ENCODE measurements at regions of chr6 and their contacts with region 1.

Region 1: DNA sequence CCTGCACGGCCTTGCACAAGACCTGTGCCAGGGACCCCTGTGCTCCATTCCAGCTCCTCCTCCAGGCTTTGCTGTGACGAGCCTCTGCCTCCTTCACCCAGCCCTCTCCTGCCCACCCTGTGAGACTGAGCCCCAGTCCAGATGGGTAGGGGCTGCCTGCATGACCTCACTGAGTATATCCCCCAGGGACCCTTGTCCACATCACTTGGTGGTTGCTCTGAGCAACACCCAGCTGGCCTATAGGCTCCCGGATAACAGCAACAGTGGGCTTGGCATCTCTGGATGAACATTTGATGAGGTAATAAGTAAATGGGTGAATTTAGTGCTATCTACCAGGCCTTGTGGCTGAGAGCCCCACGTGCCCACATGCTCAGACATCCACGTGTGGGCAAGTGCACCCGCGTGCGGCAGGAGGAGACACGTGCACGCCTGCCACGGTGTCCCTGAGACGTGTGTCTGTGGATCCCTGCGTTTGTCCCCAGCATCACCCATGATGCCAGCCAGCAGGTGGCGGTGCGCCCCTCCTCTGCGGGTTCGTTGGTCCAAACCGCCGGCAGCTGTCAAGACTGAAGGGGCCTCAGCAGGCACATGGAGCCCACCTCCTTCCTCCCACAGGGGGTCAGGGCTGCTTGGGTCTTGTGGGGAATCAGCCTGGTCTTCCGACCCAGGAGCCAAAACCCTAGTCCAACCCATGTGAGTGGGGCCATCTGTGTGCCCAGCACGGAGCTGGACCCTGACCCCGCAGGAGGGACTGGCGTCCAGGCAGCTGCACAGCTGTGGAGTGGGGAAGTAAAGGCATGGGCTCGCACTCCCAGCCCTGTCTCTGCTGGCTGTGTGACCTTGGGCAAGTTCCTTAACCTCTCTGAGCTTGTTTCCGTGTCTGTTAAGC is 45.9 kb downstream of the FGD2 start:
- DNase-seq: peak; percentile 88 to 93
- ATAC-seq: peak; percentile 77 to 90 (median 83)
- H3K4me3 ChIP-seq: peak overlapping the region in 1 of 10 donors; percentile 31
- H3K27ac ChIP-seq: peak overlapping the region in 5 of 10 donors; percentile 46 to 93 (median 73)
- H3K4me1 ChIP-seq: peaks cover 6 to 58% (median 19%) of the 10 kb centered on the region in 9 donors
- H3K27me3 ChIP-seq: no peaks in the 10 kb centered on the region
- CTCF ChIP-seq: peak; percentile 80 to 94 (median 91)

Region 2: GRCh38 chr6:36897609-36898008 is 153.8 kb before region 1 on chr6:
- intact Hi-C with region 1: no loop called
- DNase-seq: no peak
- ATAC-seq: peak in 2 of 8 donors; percentile 63 to 68
- H3K4me3 ChIP-seq: no peak overlapping the region
- H3K27ac ChIP-seq: no peak overlapping the region
- H3K4me1 ChIP-seq: peaks cover 0 to 6% (median 0%) of the 10 kb centered on the region in 9 donors
- H3K27me3 ChIP-seq: no peaks in the 10 kb centered on the region
- CTCF ChIP-seq: peak in 8 of 9 donors; percentile 4 to 49 (median 28)

Region 3: DNA sequence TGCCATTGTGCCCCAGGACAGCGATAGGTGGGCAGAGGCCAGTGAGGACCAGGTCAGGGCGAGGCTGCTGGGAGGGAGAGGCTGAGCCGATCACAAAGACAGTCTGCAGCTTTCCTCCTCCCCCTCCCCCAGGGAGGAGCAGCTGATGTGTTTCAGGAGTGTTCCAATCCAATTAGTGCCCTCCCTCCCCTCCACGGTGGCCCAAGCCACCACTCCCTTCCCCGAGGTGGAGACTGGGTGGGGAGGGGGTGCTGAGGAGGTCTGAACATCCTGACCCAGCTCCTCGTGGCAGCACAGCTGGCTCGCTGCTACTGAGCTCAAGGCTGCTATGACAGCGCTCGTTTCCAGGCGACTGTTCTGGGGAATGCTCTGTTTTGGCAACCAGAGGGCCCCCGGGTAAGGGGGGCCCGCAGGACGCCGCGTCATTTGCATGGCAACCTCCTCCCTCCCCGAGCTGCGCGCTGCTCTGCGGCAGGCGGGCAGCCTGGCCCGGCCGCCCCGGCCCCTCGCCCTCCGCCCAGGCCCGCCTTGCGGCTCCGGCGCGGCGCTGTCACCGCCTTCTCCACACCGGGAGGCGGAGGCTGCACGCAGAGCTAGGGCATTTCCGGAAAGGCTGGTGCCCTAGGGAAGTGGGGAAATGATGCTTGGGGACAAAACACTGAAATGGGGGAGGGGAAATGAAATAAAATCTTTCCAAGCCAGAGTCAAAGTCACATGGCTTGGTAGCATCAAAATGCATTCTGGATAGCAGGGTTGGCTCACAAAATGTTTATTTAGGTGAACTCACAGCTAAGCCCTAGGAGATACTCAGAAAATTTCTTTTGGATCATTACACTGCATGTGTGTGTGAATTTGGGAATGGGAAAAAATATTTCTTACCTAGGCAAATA is 51.1 kb after region 1 on chr6:
- intact Hi-C with region 1: loop called in 1 of 10 experiments (anchors 2 kb)
- DNase-seq: peak; percentile 87 to 89
- ATAC-seq: peak; percentile 91 to 97 (median 94)
- H3K4me3 ChIP-seq: peak overlapping the region; percentile 14 to 60 (median 48)
- H3K27ac ChIP-seq: peak overlapping the region; percentile 51 to 94 (median 86)
- H3K4me1 ChIP-seq: peaks cover 7 to 39% (median 21%) of the 10 kb centered on the region in 9 donors
- H3K27me3 ChIP-seq: no peaks in the 10 kb centered on the region
- CTCF ChIP-seq: no peak

Region 4: GRCh38 chr6:37131104-37131959 is 80.0 kb after region 1 on chr6:
- intact Hi-C with region 1: loop called in 2 of 10 experiments (anchors 2 to 5 kb)
- DNase-seq: peak; percentile 51 to 82
- ATAC-seq: peak; percentile 82 to 93 (median 88)
- H3K4me3 ChIP-seq: peak overlapping the region in 1 of 10 donors; percentile 3
- H3K27ac ChIP-seq: peak overlapping the region; percentile 56 to 89 (median 72)
- H3K4me1 ChIP-seq: peaks cover 0 to 60% (median 24%) of the 10 kb centered on the region in 9 donors
- H3K27me3 ChIP-seq: no peaks in the 10 kb centered on the region
- CTCF ChIP-seq: peak in 1 of 9 donors; percentile 8

Region 5: DNA sequence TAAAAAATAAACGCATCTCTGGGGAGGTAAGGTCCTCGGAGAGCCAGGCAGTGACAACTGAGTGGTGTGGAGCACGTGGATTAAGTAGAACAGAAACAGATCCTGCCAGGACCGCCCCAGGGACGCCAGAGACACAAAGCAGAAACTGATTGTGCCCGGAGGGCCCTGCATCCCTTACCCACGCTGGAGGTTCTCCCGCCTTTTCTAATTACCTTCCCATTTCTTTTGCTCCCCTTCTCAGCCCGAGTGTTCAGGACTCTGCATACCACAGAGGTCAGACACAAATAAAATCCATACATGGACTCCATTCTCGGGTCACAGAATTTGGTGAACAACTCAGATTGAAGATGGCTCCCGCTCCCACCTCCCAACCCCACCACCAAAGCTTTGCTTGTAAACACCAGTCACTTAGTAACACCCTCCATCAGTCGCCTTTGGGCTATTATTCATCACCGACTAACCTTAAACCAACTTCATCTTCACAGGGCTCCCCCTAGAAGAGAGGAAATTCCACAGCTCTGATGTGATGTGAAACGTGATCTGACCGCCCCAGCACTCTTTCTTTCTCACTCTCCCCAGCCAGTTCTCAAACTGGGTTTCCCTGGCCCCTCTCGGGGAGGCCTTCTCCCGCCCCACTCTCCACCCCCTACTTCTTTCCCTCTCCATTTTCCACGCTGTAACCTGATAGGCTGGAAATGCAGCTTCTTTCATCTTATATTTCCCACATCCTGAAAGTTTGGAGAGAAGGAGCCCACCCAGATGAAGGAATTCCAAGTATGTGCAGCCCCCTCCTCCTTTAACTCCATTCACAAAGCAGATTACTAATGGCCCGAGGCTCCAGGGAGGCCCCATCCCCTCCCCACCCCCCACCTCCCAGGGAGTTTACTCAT is 86.1 kb after region 1 on chr6:
- intact Hi-C with region 1: loop called in 1 of 10 experiments (anchors 5 kb)
- DNase-seq: no peak
- ATAC-seq: peak; percentile 28 to 75 (median 46)
- H3K4me3 ChIP-seq: no peak overlapping the region
- H3K27ac ChIP-seq: peak overlapping the region in 2 of 10 donors; percentile 7 to 77
- H3K4me1 ChIP-seq: peaks cover 3 to 44% (median 13%) of the 10 kb centered on the region in 9 donors
- H3K27me3 ChIP-seq: no peaks in the 10 kb centered on the region
- CTCF ChIP-seq: no peak

Region 6: DNA sequence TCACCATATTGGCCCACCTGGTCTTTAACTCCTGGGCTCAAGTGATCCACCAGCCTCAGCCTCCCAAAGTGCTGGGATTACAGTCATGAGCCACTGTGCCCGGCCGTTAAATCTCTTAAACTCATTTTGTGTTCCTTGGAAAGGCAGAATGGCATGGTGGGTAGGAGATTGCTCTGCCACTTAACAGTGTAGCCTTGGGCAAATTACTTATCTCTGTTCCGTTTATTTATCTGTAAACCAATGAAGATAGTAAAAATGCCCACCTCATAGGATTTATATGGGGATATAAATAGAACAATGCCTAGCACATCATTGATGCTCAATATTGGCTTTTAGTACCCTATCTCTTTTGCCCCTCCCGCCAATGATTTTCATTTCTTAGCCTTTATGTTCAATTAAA is 111.4 kb after region 1 on chr6:
- intact Hi-C with region 1: loop called in 1 of 10 experiments (anchors 2 kb)
- DNase-seq: no peak
- ATAC-seq: no peak
- H3K4me3 ChIP-seq: no peak overlapping the region
- H3K27ac ChIP-seq: no peak overlapping the region
- H3K4me1 ChIP-seq: peaks cover 0 to 21% (median 0%) of the 10 kb centered on the region in 9 donors
- H3K27me3 ChIP-seq: no peaks in the 10 kb centered on the region
- CTCF ChIP-seq: no peak